Activated B cell treated with CpG ODN at 0.5 μM for 24 hours (primary cell): ENCODE measurements at regions of chr1 and their contacts with region 1.

Region 1: DNA sequence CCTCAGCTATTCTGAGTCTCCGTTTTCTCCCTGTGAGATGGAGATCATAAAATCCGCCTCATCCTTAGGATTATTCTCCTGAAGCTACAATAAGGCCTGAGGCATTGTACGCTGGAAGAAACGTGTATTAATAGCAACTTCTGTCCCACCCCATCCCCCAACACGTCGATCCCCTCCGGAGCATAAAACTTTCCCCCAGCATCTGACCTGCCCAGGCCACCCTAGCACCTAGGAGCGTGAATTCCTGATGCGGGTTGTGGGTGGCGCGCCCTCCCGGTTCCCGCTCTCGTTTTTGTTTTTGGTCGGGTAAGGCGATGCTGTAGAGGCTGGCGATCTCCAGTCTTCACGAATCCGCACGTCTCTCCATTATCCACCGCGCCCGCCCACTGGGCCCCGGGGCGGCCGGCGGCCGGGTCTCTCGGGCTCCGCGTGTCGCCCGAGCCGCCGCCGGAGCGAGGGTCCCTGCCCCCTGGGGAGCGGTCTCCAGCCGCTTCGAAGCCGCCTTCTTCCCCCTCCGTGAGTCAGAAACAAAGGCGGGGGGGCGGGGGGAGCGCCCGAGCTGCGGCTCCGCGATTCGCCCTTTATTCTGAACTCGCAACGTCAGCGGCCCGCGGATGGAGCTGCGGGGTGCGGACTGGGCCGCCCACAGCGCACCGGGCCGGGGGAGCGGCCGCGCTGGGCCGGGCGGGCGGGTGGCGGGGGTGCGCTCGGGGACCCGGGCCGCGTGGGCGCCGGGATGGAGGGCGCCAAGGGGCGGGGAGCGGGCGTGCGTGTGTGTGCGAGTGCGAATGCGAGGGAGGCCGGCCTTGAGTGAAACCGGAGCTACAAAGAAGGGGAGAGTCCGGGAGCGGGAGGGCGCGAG is at the start of gene PLEKHO1:
- DNase-seq: peak; percentile 76
- ATAC-seq: peak; percentile 80
- H3K4me3 Mint-ChIP-seq: peak within 1 kb of the TSS; percentile 97
- H3K27ac Mint-ChIP-seq: peak within 1 kb of the TSS; percentile 96
- H3K4me1 Mint-ChIP-seq: peaks cover 72% of the 10 kb centered on the region
- H3K27me3 Mint-ChIP-seq: no peaks in the 10 kb centered on the region
- CTCF ChIP-seq: no peak
- total RNA-seq, gene PLEKHO1: 195 and 208 TPM in 2 replicates

Region 2: GRCh38 chr1:150067184-150068036 is 82.1 kb before region 1 on chr1 and contains the start of gene VPS45:
- CTCF ChIA-PET with region 1: no interaction called
- POLR2A ChIA-PET with region 1: interaction called, 17 read pairs
- intact Hi-C with region 1: no loop called
- DNase-seq: peak; percentile 71
- ATAC-seq: peak; percentile 86
- H3K4me3 Mint-ChIP-seq: peak within 1 kb of the TSS; percentile 95
- H3K27ac Mint-ChIP-seq: peak within 1 kb of the TSS; percentile 95
- H3K4me1 Mint-ChIP-seq: peaks cover 31% of the 10 kb centered on the region
- H3K27me3 Mint-ChIP-seq: no peaks in the 10 kb centered on the region
- CTCF ChIP-seq: no peak
- total RNA-seq, gene VPS45: 39.0 and 46.0 TPM in 2 replicates

Region 3: GRCh38 chr1:150072959-150073358 is 76.5 kb before region 1 on chr1:
- CTCF ChIA-PET with region 1: interaction called, 10 read pairs
- POLR2A ChIA-PET with region 1: interaction called, 17 read pairs
- intact Hi-C with region 1: no loop called
- DNase-seq: no peak
- ATAC-seq: peak; percentile 69
- H3K4me3 Mint-ChIP-seq: no peak overlapping the region
- H3K27ac Mint-ChIP-seq: peak overlapping the region; percentile 5
- H3K4me1 Mint-ChIP-seq: peaks cover 39% of the 10 kb centered on the region
- H3K27me3 Mint-ChIP-seq: no peaks in the 10 kb centered on the region
- CTCF ChIP-seq: no peak

Region 4: DNA sequence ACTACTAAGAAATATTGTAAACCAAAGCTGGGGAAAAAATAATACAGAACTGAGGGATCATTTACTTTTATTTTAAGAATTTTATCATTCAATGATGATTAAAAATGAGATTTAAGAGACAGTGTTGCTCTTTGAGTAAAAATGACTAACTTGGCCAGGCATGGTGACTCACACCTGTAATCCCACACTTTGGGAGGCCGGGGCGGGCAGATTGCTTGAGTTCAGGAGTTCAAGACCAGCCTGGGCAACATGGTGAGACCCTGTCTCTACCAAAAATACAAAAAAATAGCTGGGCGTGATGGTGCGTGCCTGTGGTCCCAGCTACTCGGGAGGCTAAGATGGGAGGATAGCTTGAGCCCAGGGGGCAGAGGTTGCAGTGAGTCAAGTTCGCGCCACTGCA is 21.6 kb before region 1 on chr1:
- CTCF ChIA-PET with region 1: no interaction called
- POLR2A ChIA-PET with region 1: interaction called, 4 read pairs
- intact Hi-C with region 1: loop called (anchors 1 kb)
- DNase-seq: no peak
- ATAC-seq: no peak
- H3K4me3 Mint-ChIP-seq: no peak overlapping the region
- H3K27ac Mint-ChIP-seq: no peak overlapping the region
- H3K4me1 Mint-ChIP-seq: peaks cover 14% of the 10 kb centered on the region
- H3K27me3 Mint-ChIP-seq: no peaks in the 10 kb centered on the region
- CTCF ChIP-seq: no peak

Region 5: DNA sequence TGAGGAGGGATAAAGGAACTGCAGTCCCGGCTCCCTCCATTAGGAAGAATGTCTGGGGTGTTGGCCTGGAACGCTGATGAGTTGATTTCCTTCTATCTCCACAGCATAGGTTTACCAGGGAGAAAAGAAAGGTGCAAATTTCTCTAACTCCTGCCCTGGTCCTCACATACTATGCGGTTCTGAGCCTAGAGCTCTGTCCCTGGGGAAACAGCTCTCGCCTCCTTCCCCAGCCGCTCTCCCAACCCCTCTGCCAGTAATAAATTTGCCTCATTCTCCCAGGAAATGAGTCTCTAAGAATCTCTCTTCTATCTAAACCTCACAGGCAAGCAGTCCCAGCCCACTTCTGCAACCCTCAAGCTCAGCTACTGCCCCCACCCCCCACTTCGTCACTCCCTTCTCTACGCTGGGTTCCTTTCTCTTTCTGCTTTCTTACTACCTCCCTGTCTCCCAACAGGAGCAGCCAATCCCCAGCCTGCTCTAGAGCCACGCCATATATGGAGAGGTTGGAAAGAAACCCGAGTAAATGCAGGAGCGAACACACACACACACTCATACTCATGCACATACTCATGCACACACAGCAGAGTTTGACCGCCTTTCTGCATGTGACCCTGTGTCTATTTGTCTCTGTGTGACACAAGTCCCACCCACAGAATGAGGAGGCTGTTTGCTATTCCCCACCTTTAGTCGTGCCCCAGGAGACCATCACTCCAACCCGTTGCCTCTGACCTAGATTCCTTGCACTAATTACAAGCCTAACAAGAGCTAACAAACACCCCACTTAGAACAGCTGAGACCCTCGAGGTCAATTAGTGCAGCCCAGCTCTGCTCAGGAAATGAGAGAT is 13.6 kb after region 1 on chr1:
- CTCF ChIA-PET with region 1: interaction called, 21 read pairs
- POLR2A ChIA-PET with region 1: interaction called, 388 read pairs
- intact Hi-C with region 1: loop called (anchors 1 kb)
- DNase-seq: peak; percentile 34
- ATAC-seq: peak; percentile 28
- H3K4me3 Mint-ChIP-seq: peak overlapping the region; percentile 81
- H3K27ac Mint-ChIP-seq: peak overlapping the region; percentile 98
- H3K4me1 Mint-ChIP-seq: peaks cover 86% of the 10 kb centered on the region
- H3K27me3 Mint-ChIP-seq: no peaks in the 10 kb centered on the region
- CTCF ChIP-seq: no peak